Right ventricle myocardium superior (tissue), 1 donor: ENCODE measurements at regions of chr15 and their contacts with region 1.

Region 1: GRCh38 chr15:84955089-84955848 is 26.4 kb upstream of the PDE8A start:
- DNase-seq: peak; percentile 77
- ATAC-seq: peak; percentile 96

Region 2: DNA sequence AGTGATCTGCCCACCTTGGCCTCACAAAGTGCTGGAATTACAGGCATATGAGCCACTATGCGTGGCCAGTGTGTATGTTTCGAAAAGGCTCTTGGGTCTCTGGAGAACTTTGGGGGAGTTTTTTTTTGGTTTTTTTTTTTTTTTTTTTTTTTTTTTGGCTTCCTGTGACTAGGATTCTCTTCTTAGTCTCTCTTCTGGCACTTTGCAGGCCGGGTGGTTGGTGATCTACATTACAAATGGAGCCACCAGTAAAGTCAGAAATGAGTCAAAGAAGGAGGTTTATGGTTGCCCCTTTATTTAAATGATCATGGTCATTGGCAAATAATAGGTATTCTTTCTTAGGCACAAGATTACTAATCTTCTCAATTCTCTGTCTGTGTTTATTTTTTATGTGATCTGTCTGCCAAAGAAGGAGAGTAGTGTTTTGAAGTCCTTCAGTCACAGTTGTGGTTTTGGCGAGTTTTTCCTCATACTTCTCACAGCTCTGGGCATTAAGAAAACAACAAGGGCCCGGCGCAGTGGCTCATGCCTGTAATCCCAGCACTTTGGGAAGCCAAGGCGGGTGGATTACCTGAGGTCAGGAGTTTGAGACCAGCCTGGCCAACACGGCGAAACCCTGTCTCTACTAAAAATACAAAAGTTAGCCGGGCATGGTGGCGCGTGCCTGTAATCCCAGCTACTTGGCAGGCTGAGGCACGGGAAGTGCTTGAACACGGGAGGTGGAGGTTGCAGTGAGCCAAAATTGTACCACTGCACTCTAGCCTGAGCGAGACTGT is 64.7 kb after region 1 on chr15:
- intact Hi-C with region 1: no loop called
- DNase-seq: no peak
- ATAC-seq: no peak

Region 3: DNA sequence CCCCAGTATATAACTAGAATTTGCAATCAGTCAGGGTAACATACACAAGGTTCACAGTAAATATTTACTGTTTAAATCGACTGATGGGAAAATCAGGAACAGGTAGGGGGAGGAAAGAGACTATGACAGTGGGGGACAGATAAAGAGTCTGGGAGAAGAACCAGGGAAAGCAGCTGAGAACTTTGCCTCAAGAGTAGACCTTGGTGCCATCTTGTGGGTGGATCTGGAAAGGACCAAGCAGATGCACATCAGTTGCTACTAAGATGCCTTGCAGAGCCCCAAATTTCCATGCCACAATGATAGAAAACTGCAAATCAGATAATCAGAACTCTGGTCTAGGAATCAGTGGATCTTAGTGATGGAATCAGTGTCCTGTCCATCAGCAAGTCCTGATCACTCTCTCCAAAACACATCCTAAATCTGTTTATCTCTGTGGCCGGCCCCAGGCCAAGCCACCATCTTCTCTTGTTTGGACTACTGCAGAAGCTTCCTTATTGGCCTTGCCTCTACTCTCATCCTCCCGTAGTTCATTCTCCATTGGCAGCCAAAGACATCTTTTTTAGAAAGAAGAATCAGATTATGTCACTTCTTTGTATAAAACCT is 89.1 kb after region 1 on chr15:
- intact Hi-C with region 1: loop called (anchors 2 kb)
- DNase-seq: no peak
- ATAC-seq: peak; percentile 86